GM12878 (cell line): ENCODE measurements at regions of chr14 and their contacts with region 1.

Region 1: GRCh38 chr14:93033983-93034670 is 81.6 kb downstream of the ITPK1 start:
- DNase-seq: no peak
- ATAC-seq: peak; percentile 96
- H3K4me3 ChIP-seq: no peak overlapping the region
- H3K27ac ChIP-seq: peak overlapping the region; percentile 39
- H3K4me1 ChIP-seq: peaks cover 41% of the 10 kb centered on the region
- H3K27me3 ChIP-seq: no peaks in the 10 kb centered on the region
- CTCF ChIP-seq: peak; percentile 78 to 85 (median 82)
- EP300 ChIP-seq: no peak
- POLR2A ChIP-seq: no peak
- RAD21 ChIP-seq: peak; percentile 84

Region 2: GRCh38 chr14:92897922-92898565 is 136.1 kb before region 1 on chr14:
- CTCF ChIA-PET with region 1: no interaction called
- POLR2A ChIA-PET with region 1: no interaction called
- RAD21 ChIA-PET with region 1: no interaction called
- SMC1A ChIA-PET with region 1: no interaction called
- in situ Hi-C with region 1: no loop called
- intact Hi-C with region 1: no loop called
- DNase-seq: no peak
- ATAC-seq: peak; percentile 64
- H3K4me3 ChIP-seq: no peak overlapping the region
- H3K27ac ChIP-seq: no peak overlapping the region
- H3K4me1 ChIP-seq: no peaks in the 10 kb centered on the region; the same call in 1 of the 2 replicates
- H3K27me3 ChIP-seq: no peaks in the 10 kb centered on the region
- CTCF ChIP-seq: no peak
- EP300 ChIP-seq: no peak
- POLR2A ChIP-seq: no peak
- RAD21 ChIP-seq: no peak

Region 3: DNA sequence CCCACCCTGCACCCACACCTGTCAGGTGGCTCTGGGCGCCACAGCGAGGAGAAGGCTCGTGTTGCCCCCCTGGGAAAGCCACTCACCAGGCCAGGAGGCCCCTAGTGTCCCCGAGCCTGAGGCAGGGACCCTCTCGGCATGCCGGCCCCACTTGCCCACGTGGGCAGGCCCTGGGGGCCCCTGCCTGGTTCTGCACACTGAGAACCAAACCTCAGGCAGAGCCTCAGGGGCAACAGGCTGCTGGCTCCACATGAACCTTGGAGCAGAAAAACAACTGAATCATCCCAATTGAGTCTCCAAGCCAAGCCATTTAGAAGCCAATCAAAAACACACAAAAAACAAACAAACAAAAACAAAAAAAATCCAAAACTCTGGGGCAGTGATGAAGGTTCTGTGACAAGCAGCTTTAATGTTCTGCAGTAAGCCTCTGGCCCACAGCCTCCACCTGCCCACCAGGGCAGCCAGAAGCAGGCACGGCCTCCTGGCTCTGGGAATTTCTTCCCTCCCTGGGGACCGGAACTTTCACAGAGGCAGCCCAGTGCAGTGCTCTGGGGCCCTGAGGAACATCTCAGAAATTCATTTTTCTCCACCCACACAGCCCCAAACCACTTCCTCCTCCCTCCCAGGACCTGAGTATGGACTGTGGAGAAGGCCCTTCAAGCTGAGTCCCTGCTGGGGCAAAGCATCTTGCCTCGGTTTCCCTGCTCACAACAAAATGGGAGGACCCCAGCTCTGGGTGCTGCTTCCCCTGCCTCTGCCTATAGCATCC is 21.0 kb before region 1 on chr14:
- CTCF ChIA-PET with region 1: no interaction called
- POLR2A ChIA-PET with region 1: no interaction called
- RAD21 ChIA-PET with region 1: no interaction called
- SMC1A ChIA-PET with region 1: no interaction called
- in situ Hi-C with region 1: no loop called
- intact Hi-C with region 1: no loop called
- DNase-seq: no peak
- ATAC-seq: peak; percentile 76
- H3K4me3 ChIP-seq: no peak overlapping the region
- H3K27ac ChIP-seq: peak overlapping the region; percentile 41
- H3K4me1 ChIP-seq: peaks cover 17% of the 10 kb centered on the region
- H3K27me3 ChIP-seq: no peaks in the 10 kb centered on the region
- CTCF ChIP-seq: no peak
- EP300 ChIP-seq: no peak
- POLR2A ChIP-seq: no peak
- RAD21 ChIP-seq: no peak

Region 4: DNA sequence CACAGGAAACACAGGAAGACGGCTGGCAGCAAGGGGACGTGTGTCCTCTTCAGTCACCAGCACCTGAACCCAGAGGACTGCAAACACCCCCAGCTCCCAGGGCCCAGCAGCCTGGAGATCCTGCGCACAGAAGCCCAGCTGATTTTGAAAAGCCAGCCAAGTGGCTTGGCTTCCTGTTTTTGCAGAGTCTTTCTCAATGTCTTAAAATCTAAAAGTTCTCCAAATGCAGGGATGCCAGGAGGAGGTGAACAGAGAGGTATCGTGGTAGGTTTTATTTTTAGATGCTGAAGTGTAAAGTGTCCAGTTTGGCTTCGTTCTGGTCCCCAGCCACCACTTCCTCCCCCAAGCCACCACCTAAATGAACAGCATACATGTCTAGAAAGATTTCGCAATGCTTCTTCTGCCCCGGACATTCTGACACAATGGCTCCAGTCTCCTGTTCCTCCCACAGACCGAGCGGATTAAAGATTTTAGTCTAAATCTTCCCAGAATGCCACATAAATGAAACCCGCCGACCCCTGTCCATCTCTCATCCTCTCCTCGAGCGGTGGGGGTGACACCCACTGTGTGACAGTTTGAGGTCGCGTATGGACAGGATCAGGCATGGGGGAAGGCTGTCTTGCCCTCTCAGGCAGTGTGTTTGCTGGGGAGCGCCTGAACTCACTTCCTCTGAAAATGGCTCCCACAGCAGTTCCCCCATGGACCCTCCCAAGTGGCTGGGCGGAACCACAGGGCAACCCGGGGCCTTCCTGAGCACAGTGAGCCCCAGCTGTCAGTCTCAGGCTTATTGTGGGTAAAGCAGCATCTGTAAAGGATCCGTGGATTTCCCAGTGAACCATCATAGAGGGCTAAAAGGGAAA is 40.0 kb after region 1 on chr14:
- CTCF ChIA-PET with region 1: interaction called, 13 read pairs
- POLR2A ChIA-PET with region 1: no interaction called
- RAD21 ChIA-PET with region 1: interaction called, 8 read pairs
- SMC1A ChIA-PET with region 1: interaction called, 7 read pairs
- in situ Hi-C with region 1: no loop called
- intact Hi-C with region 1: no loop called
- DNase-seq: no peak
- ATAC-seq: peak; percentile 57
- H3K4me3 ChIP-seq: peak overlapping the region; percentile 17; the same call in 1 of the 2 replicates
- H3K27ac ChIP-seq: peak overlapping the region; percentile 81
- H3K4me1 ChIP-seq: peaks cover 33% of the 10 kb centered on the region
- H3K27me3 ChIP-seq: no peaks in the 10 kb centered on the region
- CTCF ChIP-seq: no peak
- EP300 ChIP-seq: no peak
- POLR2A ChIP-seq: peak; percentile 54
- RAD21 ChIP-seq: no peak

Region 5: GRCh38 chr14:93103392-93104080 is 69.4 kb after region 1 on chr14:
- CTCF ChIA-PET with region 1: interaction called, 26 read pairs
- POLR2A ChIA-PET with region 1: no interaction called
- RAD21 ChIA-PET with region 1: interaction called, 8 read pairs
- SMC1A ChIA-PET with region 1: interaction called, 61 read pairs
- in situ Hi-C with region 1: no loop called
- intact Hi-C with region 1: no loop called
- DNase-seq: peak; percentile 72
- ATAC-seq: peak; percentile 98
- H3K4me3 ChIP-seq: peak overlapping the region; percentile 46
- H3K27ac ChIP-seq: peak overlapping the region; percentile 78
- H3K4me1 ChIP-seq: peaks cover 32% of the 10 kb centered on the region
- H3K27me3 ChIP-seq: no peaks in the 10 kb centered on the region
- CTCF ChIP-seq: no peak
- EP300 ChIP-seq: no peak
- POLR2A ChIP-seq: peak; percentile 48
- RAD21 ChIP-seq: no peak

Region 6: GRCh38 chr14:93132470-93133065 is 98.4 kb after region 1 on chr14:
- CTCF ChIA-PET with region 1: interaction called, 33 read pairs
- POLR2A ChIA-PET with region 1: no interaction called
- RAD21 ChIA-PET with region 1: interaction called, 12 read pairs
- SMC1A ChIA-PET with region 1: interaction called, 9 read pairs
- in situ Hi-C with region 1: no loop called
- intact Hi-C with region 1: no loop called
- DNase-seq: no peak
- ATAC-seq: peak; percentile 94
- H3K4me3 ChIP-seq: no peak overlapping the region
- H3K27ac ChIP-seq: no peak overlapping the region
- H3K4me1 ChIP-seq: no peaks in the 10 kb centered on the region
- H3K27me3 ChIP-seq: no peaks in the 10 kb centered on the region
- CTCF ChIP-seq: peak; percentile 51 to 64 (median 62)
- EP300 ChIP-seq: no peak
- POLR2A ChIP-seq: no peak
- RAD21 ChIP-seq: peak; percentile 58

Region 7: GRCh38 chr14:93137864-93138263 is 103.7 kb after region 1 on chr14:
- CTCF ChIA-PET with region 1: interaction called, 33 read pairs
- POLR2A ChIA-PET with region 1: no interaction called
- RAD21 ChIA-PET with region 1: interaction called, 12 read pairs
- SMC1A ChIA-PET with region 1: interaction called, 9 read pairs
- in situ Hi-C with region 1: no loop called
- intact Hi-C with region 1: no loop called
- DNase-seq: no peak
- ATAC-seq: no peak
- H3K4me3 ChIP-seq: no peak overlapping the region
- H3K27ac ChIP-seq: no peak overlapping the region
- H3K4me1 ChIP-seq: no peaks in the 10 kb centered on the region
- H3K27me3 ChIP-seq: no peaks in the 10 kb centered on the region
- CTCF ChIP-seq: no peak
- EP300 ChIP-seq: no peak
- POLR2A ChIP-seq: no peak
- RAD21 ChIP-seq: no peak